GM12878 (cell line): ENCODE measurements at regions of chr11 and their contacts with region 1.

Region 1: GRCh38 chr11:88484873-88485621 is 147.5 kb upstream of the CTSC start:
- DNase-seq: peak; percentile 27
- ATAC-seq: peak; percentile 94
- H3K4me3 ChIP-seq: no peak overlapping the region
- H3K27ac ChIP-seq: no peak overlapping the region
- H3K4me1 ChIP-seq: peaks cover 8% of the 10 kb centered on the region
- H3K27me3 ChIP-seq: no peaks in the 10 kb centered on the region
- CTCF ChIP-seq: peak; percentile 63 to 87 (median 79)
- EP300 ChIP-seq: no peak
- POLR2A ChIP-seq: no peak
- RAD21 ChIP-seq: peak; percentile 61

Region 2: DNA sequence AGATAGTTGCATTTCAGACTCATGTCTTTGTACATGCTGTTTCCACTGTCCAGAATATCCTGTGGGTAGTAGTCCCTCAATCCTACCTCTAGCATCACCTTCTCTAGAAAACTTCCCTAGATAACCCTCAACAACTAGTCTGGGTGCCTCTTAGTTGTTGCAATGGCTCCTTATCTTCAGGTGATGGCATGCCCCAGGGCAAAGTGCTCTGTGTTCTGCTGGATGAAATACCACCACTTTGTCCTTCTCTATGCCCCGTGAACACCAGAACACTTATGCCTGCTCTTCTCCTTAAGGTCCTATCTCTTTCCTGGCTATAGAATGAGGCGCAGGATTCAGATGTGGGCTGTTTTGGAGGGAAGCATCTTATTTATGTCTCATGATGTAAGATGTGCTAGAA is 10.8 kb after region 1 on chr11:
- CTCF ChIA-PET with region 1: interaction called, 11 read pairs
- POLR2A ChIA-PET with region 1: no interaction called
- RAD21 ChIA-PET with region 1: no interaction called
- SMC1A ChIA-PET with region 1: interaction called, 3 read pairs
- in situ Hi-C with region 1: no loop called
- intact Hi-C with region 1: no loop called
- DNase-seq: no peak
- ATAC-seq: no peak
- H3K4me3 ChIP-seq: no peak overlapping the region
- H3K27ac ChIP-seq: no peak overlapping the region
- H3K4me1 ChIP-seq: no peaks in the 10 kb centered on the region
- H3K27me3 ChIP-seq: no peaks in the 10 kb centered on the region
- CTCF ChIP-seq: no peak
- EP300 ChIP-seq: no peak
- POLR2A ChIP-seq: no peak
- RAD21 ChIP-seq: no peak